Activated T-helper 1 cell treated with anti-CD3 and anti-CD28 coated beads, Interleukin-12 subunit alpha, Interleukin-12 subunit beta, Interleukin-2, Interleukin-4 antibody, amounts not matched to agents 30 ng/mL and 10 ng/mL and 1 ng/mL, durations not matched to agents 14 hours and 24 hours and 36 hours (primary cell): ENCODE measurements at regions of chr5 and their contacts with region 1.

Region 1: DNA sequence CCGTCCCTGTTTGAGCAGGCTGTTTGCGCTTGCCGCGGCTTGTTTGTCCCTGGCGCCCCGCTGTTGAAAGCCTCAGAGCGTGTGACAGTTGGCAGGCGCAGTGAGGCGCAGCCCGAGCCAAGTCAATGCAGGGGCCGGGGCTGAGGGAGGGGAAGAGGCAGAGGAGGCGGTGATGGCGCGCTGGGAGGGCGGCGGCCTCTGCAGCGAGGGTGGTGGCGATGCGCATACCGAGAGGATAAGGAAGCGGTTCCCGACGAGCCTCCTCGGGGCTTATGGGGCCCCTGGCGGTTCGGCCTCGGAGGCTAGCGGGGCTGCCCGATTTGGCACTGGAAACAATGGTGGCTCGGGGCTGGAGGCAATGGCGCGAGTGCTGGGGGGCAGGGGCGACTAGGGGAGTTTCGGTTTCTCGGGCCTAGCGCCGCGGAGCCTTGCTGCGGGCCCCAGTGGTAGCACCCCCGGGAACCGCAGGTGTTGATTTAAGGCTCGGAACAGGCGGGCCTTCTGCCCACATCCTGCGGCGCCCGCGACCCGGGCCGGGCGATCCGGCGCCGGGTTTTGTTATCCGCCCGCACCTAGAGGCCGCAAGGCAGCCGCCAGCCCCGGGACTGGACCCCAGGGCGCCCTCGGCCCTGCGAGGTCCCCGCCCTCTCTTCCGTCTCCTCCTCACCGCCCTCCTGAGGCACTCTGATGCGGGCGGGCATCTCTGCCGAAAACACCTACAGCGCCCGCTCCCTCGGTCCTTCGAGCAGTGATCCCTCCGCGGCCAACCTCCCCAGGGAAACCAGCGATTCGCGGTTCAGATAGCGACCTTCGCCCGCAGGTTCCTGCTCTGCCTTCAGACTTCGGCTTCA is 947 bp upstream of the LNPEP start:
- DNase-seq: peak; percentile 96
- H3K4me3 Mint-ChIP-seq: peak overlapping the region; percentile 97
- H3K27ac Mint-ChIP-seq: peak overlapping the region; percentile 98
- H3K4me1 Mint-ChIP-seq: peaks cover 67% of the 10 kb centered on the region
- H3K27me3 Mint-ChIP-seq: no peaks in the 10 kb centered on the region

Region 2: DNA sequence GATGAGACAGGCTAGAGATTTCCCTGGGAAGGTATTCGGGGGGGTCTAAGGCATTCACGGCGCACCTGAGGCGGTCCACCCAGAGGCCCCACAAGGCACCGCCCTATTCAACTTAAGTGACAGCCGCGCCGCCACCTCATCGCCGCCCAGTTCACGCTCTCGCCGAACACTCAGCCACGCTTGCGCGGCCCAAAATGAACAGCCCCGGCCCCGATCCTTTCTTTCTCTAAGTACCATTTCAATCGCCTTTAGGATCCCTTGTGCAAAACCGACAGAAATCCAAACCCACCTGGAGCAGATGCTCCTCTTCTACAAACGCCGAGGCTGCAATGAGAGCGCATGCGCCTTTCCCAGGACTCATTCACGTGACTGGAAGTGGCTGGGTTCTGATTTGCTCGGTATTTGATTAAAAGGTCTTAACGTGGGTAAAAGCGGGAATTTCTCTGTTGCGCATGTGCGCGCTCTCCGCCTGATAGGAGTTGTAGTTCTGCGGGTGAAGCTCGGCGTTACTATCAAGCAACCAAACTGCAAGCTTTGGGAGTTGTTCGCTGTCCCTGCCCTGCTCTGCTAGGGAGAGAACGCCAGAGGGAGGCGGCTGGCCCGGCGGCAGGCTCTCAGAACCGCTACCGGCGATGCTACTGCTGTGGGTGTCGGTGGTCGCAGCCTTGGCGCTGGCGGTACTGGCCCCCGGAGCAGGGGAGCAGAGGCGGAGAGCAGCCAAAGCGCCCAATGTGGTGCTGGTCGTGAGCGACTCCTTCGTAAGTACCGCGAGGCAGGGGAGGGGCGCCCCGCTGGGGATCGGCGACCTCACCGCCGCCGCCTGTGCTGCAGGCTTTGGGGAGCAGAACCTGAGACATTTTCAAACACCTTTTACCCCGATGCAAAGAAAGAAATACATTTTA is 1380.0 kb before region 1 on chr5 and contains the starts of genes ARSK and SKIC3:
- intact Hi-C with region 1: loop called (anchors 10 kb)
- DNase-seq: peak; percentile 90
- H3K4me3 Mint-ChIP-seq: peak within 1 kb of the TSS; percentile 94
- H3K27ac Mint-ChIP-seq: peak within 1 kb of the TSS; percentile 94
- H3K4me1 Mint-ChIP-seq: peaks cover 39% of the 10 kb centered on the region
- H3K27me3 Mint-ChIP-seq: no peaks in the 10 kb centered on the region
- total RNA-seq, gene ARSK: 3.9 and 4.2 TPM in 2 replicates
- total RNA-seq, gene SKIC3: 60.2 and 63.8 TPM in 2 replicates

Region 3: GRCh38 chr5:96702503-96703383 is 232.2 kb before region 1 on chr5:
- intact Hi-C with region 1: loop called (anchors 5 kb)
- DNase-seq: peak; percentile 65
- H3K4me3 Mint-ChIP-seq: peak overlapping the region; percentile 91
- H3K27ac Mint-ChIP-seq: peak overlapping the region; percentile 92
- H3K4me1 Mint-ChIP-seq: peaks cover 31% of the 10 kb centered on the region
- H3K27me3 Mint-ChIP-seq: no peaks in the 10 kb centered on the region

Region 4: DNA sequence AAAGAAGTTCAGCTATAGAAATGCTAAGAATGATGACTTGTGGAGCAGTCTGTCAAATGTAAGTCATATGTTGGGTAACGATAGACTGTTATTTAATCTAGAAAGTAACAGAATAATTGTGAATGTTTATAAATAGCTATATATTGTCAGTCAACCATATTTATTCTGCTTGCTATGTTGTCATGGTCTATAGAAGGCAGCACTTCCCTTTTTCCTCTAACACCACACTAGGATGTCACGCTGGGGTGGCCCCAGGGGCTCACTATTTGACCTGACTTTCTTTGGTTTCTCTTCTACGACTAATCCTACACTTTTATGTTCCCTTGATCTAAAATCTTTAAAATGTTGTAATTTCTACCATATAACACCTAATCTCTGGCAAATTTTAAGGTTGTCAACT is 38.1 kb before region 1 on chr5:
- intact Hi-C with region 1: loop called (anchors 1 kb)
- DNase-seq: no peak
- H3K4me3 Mint-ChIP-seq: peak overlapping the region; percentile 84
- H3K27ac Mint-ChIP-seq: peak overlapping the region; percentile 96
- H3K4me1 Mint-ChIP-seq: peaks cover 62% of the 10 kb centered on the region
- H3K27me3 Mint-ChIP-seq: no peaks in the 10 kb centered on the region

Region 5: DNA sequence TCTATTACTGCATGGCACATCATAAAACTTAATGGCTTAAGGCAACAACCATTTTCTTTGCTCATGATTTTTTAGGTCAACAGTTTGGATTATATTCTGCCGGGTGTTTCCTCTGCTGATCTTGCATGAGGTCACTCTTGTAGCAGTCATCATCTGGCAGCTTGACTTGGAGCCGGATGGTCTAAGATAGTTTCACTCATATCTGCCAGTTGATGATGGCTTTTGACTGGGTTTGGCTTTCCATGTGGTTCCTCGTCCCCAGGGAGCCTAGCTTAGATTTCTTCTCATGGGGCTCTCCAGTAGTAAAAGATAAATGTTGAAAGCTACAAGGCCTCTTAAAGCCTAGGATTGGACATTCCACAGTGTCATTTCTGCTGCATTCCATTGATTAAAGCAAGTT is 28.3 kb after region 1 on chr5:
- intact Hi-C with region 1: loop called (anchors 1 kb)
- DNase-seq: peak; percentile 16
- H3K4me3 Mint-ChIP-seq: peak overlapping the region; percentile 77
- H3K27ac Mint-ChIP-seq: peak overlapping the region; percentile 80
- H3K4me1 Mint-ChIP-seq: peaks cover 70% of the 10 kb centered on the region
- H3K27me3 Mint-ChIP-seq: no peaks in the 10 kb centered on the region

Region 6: GRCh38 chr5:97094579-97095317 is 159.8 kb after region 1 on chr5:
- intact Hi-C with region 1: loop called (anchors 1 kb)
- DNase-seq: peak; percentile 45
- H3K4me3 Mint-ChIP-seq: peak overlapping the region; percentile 19
- H3K27ac Mint-ChIP-seq: peak overlapping the region; percentile 67
- H3K4me1 Mint-ChIP-seq: peaks cover 28% of the 10 kb centered on the region
- H3K27me3 Mint-ChIP-seq: peaks cover 31% of the 10 kb centered on the region

Region 7: GRCh38 chr5:98928873-98929696 is 1994.2 kb after region 1 on chr5 and contains the start of gene CHD1:
- intact Hi-C with region 1: loop called (anchors 2 kb)
- DNase-seq: peak; percentile 93
- H3K4me3 Mint-ChIP-seq: peak within 1 kb of the TSS; percentile 98
- H3K27ac Mint-ChIP-seq: peak within 1 kb of the TSS; percentile 99
- H3K4me1 Mint-ChIP-seq: peaks cover 71% of the 10 kb centered on the region
- H3K27me3 Mint-ChIP-seq: no peaks in the 10 kb centered on the region
- total RNA-seq, gene CHD1: 83.0 and 83.3 TPM in 2 replicates